Psoas muscle (tissue), 8 donors: ENCODE measurements at regions of chr5 and their contacts with region 1.

Region 1: GRCh38 chr5:38447786-38448185 is 108.7 kb downstream of the LIFR start:
- DNase-seq: peak; percentile 43 to 67
- ATAC-seq: peak in 3 of 4 donors; percentile 15 to 40 (median 33)
- H3K4me3 ChIP-seq: peak overlapping the region; percentile 81
- H3K27ac ChIP-seq: peak overlapping the region; percentile 94
- H3K4me1 ChIP-seq: peaks cover 34% of the 10 kb centered on the region
- H3K27me3 ChIP-seq: no peaks in the 10 kb centered on the region
- CTCF ChIP-seq: no peak

Region 2: DNA sequence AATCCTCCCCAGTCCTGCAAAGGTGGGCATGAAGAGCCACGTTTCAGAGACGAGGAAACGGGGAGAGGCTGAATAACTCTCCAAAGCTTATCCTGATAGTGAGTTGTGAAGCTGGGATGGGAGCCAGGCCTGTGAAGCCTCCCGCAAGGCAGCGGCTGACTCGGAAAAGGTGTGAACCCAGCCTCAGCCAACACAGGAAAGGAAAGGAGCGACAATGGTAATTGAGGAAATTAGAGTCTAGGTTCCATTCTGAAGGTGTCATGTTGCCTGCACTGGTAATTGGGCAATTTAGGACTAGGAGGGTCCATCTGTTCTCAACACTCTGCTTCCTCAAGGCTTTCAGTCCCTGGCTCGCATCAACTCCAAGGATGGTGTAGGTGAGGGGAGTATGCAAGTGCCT is 25.2 kb after region 1 on chr5:
- intact Hi-C with region 1: loop called in 1 of 2 experiments (anchors 1 kb)
- DNase-seq: no peak
- ATAC-seq: no peak
- H3K4me3 ChIP-seq: no peak overlapping the region
- H3K27ac ChIP-seq: no peak overlapping the region
- H3K4me1 ChIP-seq: peaks cover 29% of the 10 kb centered on the region
- H3K27me3 ChIP-seq: no peaks in the 10 kb centered on the region
- CTCF ChIP-seq: no peak

Region 3: GRCh38 chr5:38780950-38781349 is 333.2 kb after region 1 on chr5:
- intact Hi-C with region 1: no loop called
- DNase-seq: peak; percentile 56 to 68
- ATAC-seq: peak; percentile 42 to 77 (median 65)
- H3K4me3 ChIP-seq: no peak overlapping the region
- H3K27ac ChIP-seq: no peak overlapping the region
- H3K4me1 ChIP-seq: peaks cover 5% of the 10 kb centered on the region
- H3K27me3 ChIP-seq: no peaks in the 10 kb centered on the region
- CTCF ChIP-seq: peak; percentile 37